Activated CD4-positive, alpha-beta T cell treated with anti-CD3 and anti-CD28 coated beads, Interleukin-2, amount 10 ng/mL, durations not matched to agents 24 days and 14 days (primary cell): ENCODE measurements at regions of chr6 and their contacts with region 1.

Region 1: DNA sequence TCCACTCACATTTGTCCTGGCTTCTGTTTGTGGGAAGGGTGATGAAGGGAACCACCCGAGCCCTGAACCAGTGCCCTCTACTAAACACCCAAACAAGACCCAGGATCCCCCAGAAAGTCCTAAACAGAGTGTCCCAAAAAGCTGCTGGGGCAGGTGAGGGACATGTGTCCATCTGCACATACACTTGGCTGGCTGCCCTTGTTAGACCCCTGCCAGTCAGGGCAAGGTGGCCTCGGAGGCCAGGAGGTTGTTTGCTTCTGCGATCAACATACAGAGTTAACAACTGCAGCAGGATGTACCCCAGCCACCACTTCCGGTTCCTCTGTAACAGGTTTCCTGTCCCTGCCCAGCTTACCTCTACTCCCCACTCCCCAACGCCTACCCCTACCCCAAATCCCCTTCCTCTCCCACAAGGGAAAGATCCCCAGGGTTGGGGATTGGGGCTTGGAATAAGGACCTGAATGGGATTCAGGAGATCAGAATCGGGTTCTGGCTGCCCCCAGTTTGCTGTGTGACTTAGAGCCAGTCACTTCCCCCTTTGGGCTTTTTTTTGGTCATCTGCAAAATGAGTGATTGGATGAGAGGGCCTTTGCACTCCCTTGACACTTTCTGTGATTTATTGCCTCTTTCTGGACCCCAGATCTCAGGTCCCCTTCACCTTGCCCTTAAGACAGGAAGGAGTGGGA is 13.9 kb downstream of the DEF6 start:
- DNase-seq: peak; percentile 88
- H3K4me3 Mint-ChIP-seq: peak overlapping the region; percentile 74
- H3K27ac Mint-ChIP-seq: peak overlapping the region; percentile 90
- H3K4me1 Mint-ChIP-seq: peaks cover 79% of the 10 kb centered on the region
- H3K27me3 Mint-ChIP-seq: no peaks in the 10 kb centered on the region

Region 2: GRCh38 chr6:35327349-35328027 is 16.0 kb after region 1 on chr6:
- intact Hi-C with region 1: loop called (anchors 2 kb)
- DNase-seq: peak; percentile 92
- H3K4me3 Mint-ChIP-seq: no peak overlapping the region
- H3K27ac Mint-ChIP-seq: peak overlapping the region; percentile 23
- H3K4me1 Mint-ChIP-seq: peaks cover 17% of the 10 kb centered on the region
- H3K27me3 Mint-ChIP-seq: no peaks in the 10 kb centered on the region